AG04450 (cell line): ENCODE measurements at regions of chr12 and their contacts with region 1.

Region 1: GRCh38 chr12:95217377-95218149 is at the starts of genes FGD6 and VEZT:
- DNase-seq: peak; percentile 98
- H3K4me3 ChIP-seq: peak within 1 kb of the TSS; percentile 92
- H3K27ac ChIP-seq: peak within 1 kb of the TSS; percentile 85
- H3K27me3 ChIP-seq: no peaks in the 10 kb centered on the region
- CTCF ChIP-seq: peak; percentile 60
- polyA plus RNA-seq, gene FGD6: 7.1 and 10.2 TPM in 2 replicates
- polyA plus RNA-seq, gene VEZT: 108 and 143 TPM in 2 replicates

Region 2: GRCh38 chr12:95072900-95073697 is 144.5 kb before region 1 on chr12 and contains the start of gene NR2C1:
- CTCF ChIA-PET with region 1: interaction called, 11 read pairs
- POLR2A ChIA-PET with region 1: interaction called, 4 read pairs
- DNase-seq: peak; percentile 77
- H3K4me3 ChIP-seq: peak within 1 kb of the TSS; percentile 82
- H3K27ac ChIP-seq: peak within 1 kb of the TSS; percentile 68
- H3K27me3 ChIP-seq: no peaks in the 10 kb centered on the region
- CTCF ChIP-seq: no peak
- polyA plus RNA-seq, gene NR2C1: 28.9 and 32.8 TPM in 2 replicates

Region 3: DNA sequence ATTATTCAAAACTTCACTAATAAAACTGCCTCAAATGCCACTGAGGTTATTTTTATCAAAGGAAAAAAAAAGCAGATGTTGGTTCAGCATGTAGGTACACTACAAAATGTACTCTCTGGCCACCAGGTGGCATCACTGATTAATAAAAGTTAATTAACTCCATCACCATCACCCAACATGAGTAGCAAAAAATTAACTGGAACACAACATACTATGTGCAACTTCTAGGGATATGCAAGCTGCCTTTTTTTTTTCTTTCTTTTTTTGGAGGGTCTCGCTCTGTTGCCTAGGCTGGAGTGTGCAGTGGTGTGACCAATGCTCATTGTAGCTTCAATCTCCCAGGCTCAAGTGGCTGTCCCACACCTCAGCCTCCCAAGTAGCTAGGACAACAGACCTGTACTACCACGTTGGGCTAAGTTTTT is 100.4 kb before region 1 on chr12:
- CTCF ChIA-PET with region 1: interaction called, 17 read pairs
- POLR2A ChIA-PET with region 1: no interaction called
- DNase-seq: peak; percentile 47
- H3K4me3 ChIP-seq: no peak overlapping the region
- H3K27ac ChIP-seq: no peak overlapping the region
- H3K27me3 ChIP-seq: no peaks in the 10 kb centered on the region
- CTCF ChIP-seq: peak; percentile 60

Region 4: DNA sequence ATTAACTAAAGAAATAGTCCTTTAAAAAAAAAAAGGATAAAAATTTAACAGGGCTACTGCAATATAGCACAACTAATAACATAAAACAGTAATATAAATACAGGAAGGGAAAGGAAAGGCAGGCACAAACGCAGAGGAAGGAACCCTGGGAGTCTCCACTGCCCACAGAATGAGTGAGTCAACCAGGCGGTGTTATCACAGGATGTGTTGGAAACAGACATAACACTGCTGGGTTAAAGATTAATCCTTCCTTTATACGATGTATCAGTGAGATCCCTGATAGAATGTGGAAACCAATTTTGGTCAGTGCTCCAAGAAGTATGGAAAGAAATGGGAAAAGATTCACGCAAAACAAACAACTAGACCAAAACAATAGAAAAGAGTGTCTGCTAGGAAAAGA is 48.2 kb before region 1 on chr12:
- CTCF ChIA-PET with region 1: interaction called, 11 read pairs
- POLR2A ChIA-PET with region 1: interaction called, 12 read pairs
- DNase-seq: peak; percentile 30
- H3K4me3 ChIP-seq: no peak overlapping the region
- H3K27ac ChIP-seq: peak overlapping the region; percentile 4
- H3K27me3 ChIP-seq: no peaks in the 10 kb centered on the region
- CTCF ChIP-seq: no peak

Region 5: DNA sequence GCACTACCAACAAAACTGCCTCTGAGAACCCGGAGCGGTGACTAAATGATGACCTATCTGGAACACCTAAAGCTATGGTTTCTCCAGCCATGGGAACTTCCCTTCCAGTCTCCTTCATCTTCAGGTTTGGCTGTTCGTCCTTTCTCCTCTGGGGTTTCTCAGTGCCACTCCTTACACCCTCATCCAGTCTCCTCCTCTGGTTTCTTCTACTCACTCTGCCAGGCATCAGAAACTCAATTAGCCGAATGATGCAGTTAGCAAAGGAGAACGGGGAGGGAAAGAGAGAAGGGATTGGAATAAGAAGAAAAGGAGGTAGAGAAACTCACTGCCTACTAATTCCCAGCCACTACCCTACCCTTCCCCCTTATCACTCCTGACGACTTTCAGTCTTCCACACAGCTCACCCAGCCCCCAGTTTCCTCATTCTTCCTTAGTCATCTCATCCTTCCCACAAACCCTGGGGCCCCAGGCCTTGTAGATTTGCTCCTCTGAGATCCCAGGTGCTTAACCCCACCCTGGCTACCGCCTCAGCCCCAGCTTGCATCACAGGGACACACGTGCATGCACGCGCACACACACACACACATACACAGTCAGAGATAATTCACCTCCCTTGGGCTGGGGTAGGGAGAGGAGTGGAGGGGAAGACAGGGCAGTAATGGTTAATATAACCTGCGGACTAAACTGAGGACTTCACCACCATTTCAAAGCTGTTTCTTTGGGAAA is 13.3 kb before region 1 on chr12:
- CTCF ChIA-PET with region 1: interaction called, 26 read pairs
- POLR2A ChIA-PET with region 1: interaction called, 3 read pairs
- DNase-seq: peak; percentile 69
- H3K4me3 ChIP-seq: no peak overlapping the region; the same call in 1 of the 2 replicates
- H3K27ac ChIP-seq: peak overlapping the region; percentile 85
- H3K27me3 ChIP-seq: no peaks in the 10 kb centered on the region
- CTCF ChIP-seq: no peak

Region 6: GRCh38 chr12:95343461-95344230 is 126.1 kb after region 1 on chr12:
- CTCF ChIA-PET with region 1: no interaction called
- POLR2A ChIA-PET with region 1: no interaction called
- DNase-seq: no peak
- H3K4me3 ChIP-seq: no peak overlapping the region
- H3K27ac ChIP-seq: no peak overlapping the region
- H3K27me3 ChIP-seq: no peaks in the 10 kb centered on the region
- CTCF ChIP-seq: no peak